Naive thymus-derived CD4-positive, alpha-beta T cell (primary cell): ENCODE measurements at regions of chr16 and their contacts with region 1.

Region 1: GRCh38 chr16:50266337-50267091 is at the start of gene ADCY7:
- DNase-seq: peak; percentile 57 to 84 (median 77)
- ATAC-seq: peak; percentile 90
- H3K4me3 ChIP-seq: peak within 1 kb of the TSS; percentile 87
- H3K4me3 Mint-ChIP-seq: peak within 1 kb of the TSS; percentile 83 to 98 (median 96)
- H3K27ac ChIP-seq: peak within 1 kb of the TSS; percentile 85
- H3K27ac Mint-ChIP-seq: peak within 1 kb of the TSS; percentile 77 to 99 (median 97)
- H3K4me1 ChIP-seq: peaks cover 41 to 46% of the 10 kb centered on the region in 2 donors
- H3K4me1 Mint-ChIP-seq: peaks cover 56 to 76% (median 60%) of the 10 kb centered on the region in 7 donors
- H3K27me3 ChIP-seq: no peaks in the 10 kb centered on the region
- H3K27me3 Mint-ChIP-seq: no peaks in the 10 kb centered on the region
- total RNA-seq, gene ADCY7: 179 to 326 (median 208) TPM

Region 2: DNA sequence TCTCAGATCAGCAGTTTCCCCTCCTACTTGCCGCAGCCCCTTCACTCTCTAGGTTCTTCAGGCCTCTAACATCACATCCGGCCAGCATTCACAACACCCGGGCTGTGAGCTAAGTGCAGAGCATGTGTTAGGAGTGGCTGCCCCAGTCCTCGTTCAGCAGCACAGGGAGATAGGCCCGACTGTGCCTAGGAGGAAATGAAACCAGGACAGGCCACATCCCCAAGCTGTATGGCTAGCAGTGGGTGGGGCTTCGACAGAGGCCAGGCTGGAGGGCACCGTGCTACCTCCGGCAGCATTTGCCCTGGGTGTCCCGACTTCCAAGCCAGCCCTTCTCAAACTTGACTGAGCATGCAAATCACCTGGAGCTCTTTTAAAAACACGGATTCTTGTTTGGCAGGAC is 691.1 kb before region 1 on chr16:
- CTCF ChIA-PET with region 1: no interaction called
- POLR2A ChIA-PET with region 1: no interaction called
- intact Hi-C with region 1: no loop called
- DNase-seq: no peak
- ATAC-seq: peak; percentile 91
- H3K4me3 ChIP-seq: no peak overlapping the region
- H3K4me3 Mint-ChIP-seq: no peak overlapping the region
- H3K27ac ChIP-seq: no peak overlapping the region
- H3K27ac Mint-ChIP-seq: no peak overlapping the region
- H3K4me1 ChIP-seq: no peaks in the 10 kb centered on the region
- H3K4me1 Mint-ChIP-seq: peaks cover 0 to 3% (median 0%) of the 10 kb centered on the region in 7 donors
- H3K27me3 ChIP-seq: no peaks in the 10 kb centered on the region
- H3K27me3 Mint-ChIP-seq: no peaks in the 10 kb centered on the region

Region 3: GRCh38 chr16:50065624-50066481 is 200.7 kb before region 1 on chr16 and contains the start of gene HEATR3:
- CTCF ChIA-PET with region 1: no interaction called
- POLR2A ChIA-PET with region 1: no interaction called
- intact Hi-C with region 1: loop called (anchors 5 kb)
- DNase-seq: peak; percentile 86 to 96 (median 90)
- ATAC-seq: peak; percentile 93
- H3K4me3 ChIP-seq: peak within 1 kb of the TSS; percentile 91
- H3K4me3 Mint-ChIP-seq: peak within 1 kb of the TSS; percentile 80 to 97 (median 92)
- H3K27ac ChIP-seq: peak within 1 kb of the TSS; percentile 81
- H3K27ac Mint-ChIP-seq: peak within 1 kb of the TSS; percentile 55 to 96 (median 93)
- H3K4me1 ChIP-seq: peaks cover 17 to 18% of the 10 kb centered on the region in 2 donors
- H3K4me1 Mint-ChIP-seq: peaks cover 34 to 49% (median 44%) of the 10 kb centered on the region in 7 donors
- H3K27me3 ChIP-seq: no peaks in the 10 kb centered on the region
- H3K27me3 Mint-ChIP-seq: no peaks in the 10 kb centered on the region
- total RNA-seq, gene HEATR3: 12.5 to 27.5 (median 23.5) TPM

Region 4: GRCh38 chr16:50281964-50282538 is 15.5 kb after region 1 on chr16:
- CTCF ChIA-PET with region 1: interaction called, 16 read pairs
- POLR2A ChIA-PET with region 1: interaction called, 257 read pairs
- intact Hi-C with region 1: loop called (anchors 1 kb)
- DNase-seq: peak in 6 of 9 donors; percentile 10 to 52 (median 38)
- ATAC-seq: peak; percentile 86
- H3K4me3 ChIP-seq: peak overlapping the region; percentile 56
- H3K4me3 Mint-ChIP-seq: peak overlapping the region; percentile 75 to 93 (median 80)
- H3K27ac ChIP-seq: peak overlapping the region; percentile 59
- H3K27ac Mint-ChIP-seq: peak overlapping the region; percentile 73 to 93 (median 85)
- H3K4me1 ChIP-seq: peaks cover 80 to 89% of the 10 kb centered on the region in 2 donors
- H3K4me1 Mint-ChIP-seq: peaks cover 71 to 96% (median 87%) of the 10 kb centered on the region in 7 donors
- H3K27me3 ChIP-seq: no peaks in the 10 kb centered on the region
- H3K27me3 Mint-ChIP-seq: no peaks in the 10 kb centered on the region

Region 5: DNA sequence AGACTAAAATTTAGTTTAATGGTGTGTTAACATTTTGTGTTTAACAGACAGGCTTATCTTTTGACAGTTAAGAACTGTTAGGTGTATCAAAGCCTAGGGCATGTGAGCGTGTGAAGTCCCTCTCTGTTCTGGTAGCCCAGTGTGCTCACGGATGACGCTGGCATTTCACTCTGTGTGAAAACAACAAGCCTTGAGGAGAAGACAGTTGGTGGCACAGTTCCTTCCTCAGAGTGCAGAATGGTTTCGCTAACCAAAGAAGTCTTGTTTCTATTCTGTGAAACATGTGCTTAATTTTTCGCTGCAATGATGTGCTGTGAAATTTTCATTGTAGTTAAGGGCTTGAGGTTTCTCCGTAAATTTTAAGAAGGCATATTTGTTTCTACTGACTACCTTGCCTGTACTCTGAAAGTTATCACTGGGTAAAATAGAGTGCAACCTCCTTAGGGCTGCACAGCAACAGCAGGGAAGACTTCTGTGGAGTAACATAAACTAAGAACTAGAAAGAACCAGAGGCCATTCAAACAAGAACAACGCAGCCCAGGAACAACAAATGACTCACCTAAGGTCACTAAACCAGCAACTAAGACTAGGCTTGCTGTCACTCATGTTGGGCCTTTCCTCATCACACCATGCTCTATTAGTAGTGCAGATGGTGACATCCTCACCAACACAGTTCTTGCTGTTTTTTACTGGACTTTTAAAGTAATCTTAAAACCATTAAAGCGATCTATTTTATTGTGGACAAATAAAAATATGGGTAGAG is 68.9 kb after region 1 on chr16:
- CTCF ChIA-PET with region 1: no interaction called
- POLR2A ChIA-PET with region 1: interaction called, 11 read pairs
- intact Hi-C with region 1: no loop called
- DNase-seq: peak in 7 of 9 donors; percentile 32 to 88 (median 61)
- ATAC-seq: peak; percentile 87
- H3K4me3 ChIP-seq: no peak overlapping the region
- H3K4me3 Mint-ChIP-seq: peak overlapping the region in 9 of 10 donors; percentile 22 to 74 (median 58)
- H3K27ac ChIP-seq: peak overlapping the region; percentile 82
- H3K27ac Mint-ChIP-seq: peak overlapping the region; percentile 56 to 99 (median 88)
- H3K4me1 ChIP-seq: peaks cover 12 to 23% of the 10 kb centered on the region in 2 donors
- H3K4me1 Mint-ChIP-seq: peaks cover 39 to 61% (median 46%) of the 10 kb centered on the region in 7 donors
- H3K27me3 ChIP-seq: no peaks in the 10 kb centered on the region
- H3K27me3 Mint-ChIP-seq: no peaks in the 10 kb centered on the region

Region 6: DNA sequence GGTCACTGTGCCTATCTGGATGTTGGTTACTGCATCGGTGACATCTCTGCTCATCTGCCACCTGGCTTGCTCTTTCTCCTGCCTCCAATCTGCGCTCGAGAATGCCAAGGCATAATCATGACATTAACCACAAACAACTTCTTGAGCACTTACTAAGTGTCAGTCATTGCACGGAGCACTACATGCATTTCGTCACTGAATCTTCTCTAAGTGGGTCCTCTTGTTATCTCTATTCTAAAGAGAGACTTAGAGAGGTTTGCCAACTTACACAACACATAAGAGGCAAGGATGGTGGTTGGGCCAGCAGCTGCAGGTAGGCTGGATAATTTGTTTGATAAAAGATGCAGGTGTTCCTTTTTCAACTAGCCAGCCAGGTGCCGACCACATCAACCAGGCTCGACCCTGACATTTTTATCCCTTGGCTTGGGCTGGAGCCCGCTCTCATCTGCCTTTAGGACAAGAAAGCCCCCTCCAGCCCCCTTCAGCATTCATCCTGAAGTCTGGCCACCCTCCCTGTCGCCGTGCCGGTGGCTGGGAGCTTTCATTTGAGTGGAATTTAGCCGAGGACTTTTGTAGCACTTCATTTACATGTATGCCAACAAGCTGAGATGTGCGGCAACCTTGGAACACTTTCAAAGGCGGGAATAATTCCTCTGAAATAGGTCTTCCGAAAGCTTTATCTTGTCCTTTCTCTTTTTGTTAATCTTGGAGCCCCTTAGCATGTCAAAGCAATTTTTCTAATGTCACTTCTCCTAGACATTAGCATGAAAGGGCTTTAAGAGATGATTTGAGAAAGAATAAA is 192.4 kb after region 1 on chr16:
- CTCF ChIA-PET with region 1: no interaction called
- POLR2A ChIA-PET with region 1: no interaction called
- intact Hi-C with region 1: no loop called
- DNase-seq: no peak
- ATAC-seq: no peak
- H3K4me3 ChIP-seq: no peak overlapping the region
- H3K4me3 Mint-ChIP-seq: no peak overlapping the region
- H3K27ac ChIP-seq: no peak overlapping the region
- H3K27ac Mint-ChIP-seq: no peak overlapping the region
- H3K4me1 ChIP-seq: no peaks in the 10 kb centered on the region
- H3K4me1 Mint-ChIP-seq: peaks cover 5 to 21% (median 12%) of the 10 kb centered on the region in 7 donors
- H3K27me3 ChIP-seq: no peaks in the 10 kb centered on the region
- H3K27me3 Mint-ChIP-seq: peaks cover 0 to 3% (median 0%) of the 10 kb centered on the region in 5 donors

Region 7: DNA sequence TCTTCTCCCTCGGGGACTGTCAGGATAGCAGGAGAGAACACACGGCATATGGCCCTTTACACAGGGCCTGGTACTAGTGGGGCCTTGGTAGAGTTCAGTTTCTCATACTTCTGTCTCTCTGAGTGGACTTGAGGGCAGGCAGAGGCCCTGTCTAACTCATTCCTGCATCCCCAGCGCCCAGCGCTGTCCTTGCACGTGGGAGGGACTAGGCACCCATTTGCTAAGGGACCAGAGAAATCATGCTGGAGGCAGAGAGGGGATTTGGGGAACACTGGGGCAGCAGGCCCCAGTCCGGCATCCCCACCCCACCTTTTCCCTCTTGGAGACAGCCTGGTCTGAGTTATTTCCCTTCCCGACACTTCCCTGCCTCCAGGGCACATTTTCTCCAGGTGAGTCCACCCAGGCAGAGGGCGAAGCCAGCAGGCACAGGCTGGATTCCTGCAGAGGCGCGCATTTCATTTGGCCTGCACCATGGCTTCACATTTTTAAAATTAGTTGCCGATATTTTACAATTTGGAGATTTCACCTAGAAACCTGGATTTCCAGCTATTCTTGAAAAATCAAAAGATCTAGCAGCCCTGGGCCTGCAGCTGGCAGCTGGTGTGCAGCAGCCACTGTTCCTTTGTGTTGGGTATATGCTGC is 272.0 kb after region 1 on chr16:
- CTCF ChIA-PET with region 1: no interaction called
- POLR2A ChIA-PET with region 1: no interaction called
- intact Hi-C with region 1: no loop called
- DNase-seq: no peak
- ATAC-seq: no peak
- H3K4me3 ChIP-seq: no peak overlapping the region
- H3K4me3 Mint-ChIP-seq: no peak overlapping the region
- H3K27ac ChIP-seq: no peak overlapping the region
- H3K27ac Mint-ChIP-seq: no peak overlapping the region
- H3K4me1 ChIP-seq: no peaks in the 10 kb centered on the region
- H3K4me1 Mint-ChIP-seq: peaks cover 0 to 4% (median 0%) of the 10 kb centered on the region in 7 donors
- H3K27me3 ChIP-seq: no peaks in the 10 kb centered on the region
- H3K27me3 Mint-ChIP-seq: peaks cover 0 to 21% (median 0%) of the 10 kb centered on the region in 5 donors

Region 8: GRCh38 chr16:50627419-50627818 is 360.9 kb after region 1 on chr16:
- CTCF ChIA-PET with region 1: no interaction called
- POLR2A ChIA-PET with region 1: no interaction called
- intact Hi-C with region 1: loop called in 1 of 2 experiments (anchors 5 kb)
- DNase-seq: peak in 7 of 9 donors; percentile 29 to 67 (median 57)
- ATAC-seq: peak; percentile 78
- H3K4me3 ChIP-seq: peak overlapping the region; percentile 29
- H3K4me3 Mint-ChIP-seq: peak overlapping the region; percentile 68 to 90 (median 84)
- H3K27ac ChIP-seq: peak overlapping the region; percentile 43
- H3K27ac Mint-ChIP-seq: peak overlapping the region; percentile 71 to 95 (median 88)
- H3K4me1 ChIP-seq: peaks cover 0 to 45% of the 10 kb centered on the region in 2 donors
- H3K4me1 Mint-ChIP-seq: peaks cover 29 to 50% (median 44%) of the 10 kb centered on the region in 7 donors
- H3K27me3 ChIP-seq: no peaks in the 10 kb centered on the region
- H3K27me3 Mint-ChIP-seq: no peaks in the 10 kb centered on the region